ENCODE measurements at regions of chr20 and their contacts with region 1.

Region 1: DNA sequence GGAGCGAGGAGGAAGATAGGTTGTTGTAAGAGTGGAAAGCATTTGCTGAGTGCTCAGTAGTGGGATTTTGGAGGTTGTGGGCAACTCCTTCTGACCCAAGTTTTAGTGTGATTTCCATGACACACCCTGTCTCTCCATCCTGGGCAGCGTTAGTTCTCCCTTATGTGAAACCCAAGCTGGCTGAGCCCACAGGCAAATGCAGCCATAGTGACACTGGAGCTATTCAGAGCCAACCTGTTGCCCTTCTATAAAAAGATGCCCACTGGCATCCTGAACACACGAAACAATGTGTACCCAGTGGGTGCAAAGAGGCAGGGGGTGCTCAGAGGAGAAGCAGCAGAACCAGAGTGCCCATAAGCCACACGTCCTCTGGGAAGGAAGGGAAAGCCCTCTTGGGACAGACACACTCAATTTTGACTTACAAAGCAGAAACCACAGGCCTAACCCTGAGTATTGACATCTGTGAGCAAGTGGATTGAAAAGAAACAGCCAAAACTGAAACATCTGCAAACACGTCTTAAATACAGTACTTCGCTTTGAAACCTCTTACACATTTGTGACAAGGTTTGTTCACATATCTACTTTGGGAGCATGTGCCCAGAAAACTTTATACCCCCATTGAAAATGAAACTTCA is 54.6 kb downstream of the BPIFB1 start:
- DNase-seq: no peak
- H3K4me3 ChIP-seq: no peak overlapping the region
- H3K27ac ChIP-seq: no peak overlapping the region
- H3K4me1 ChIP-seq: no peaks in the 10 kb centered on the region
- H3K27me3 ChIP-seq: peaks cover 7% of the 10 kb centered on the region; the same call in 1 of the 2 replicates
- CTCF ChIP-seq: no peak

Region 2: DNA sequence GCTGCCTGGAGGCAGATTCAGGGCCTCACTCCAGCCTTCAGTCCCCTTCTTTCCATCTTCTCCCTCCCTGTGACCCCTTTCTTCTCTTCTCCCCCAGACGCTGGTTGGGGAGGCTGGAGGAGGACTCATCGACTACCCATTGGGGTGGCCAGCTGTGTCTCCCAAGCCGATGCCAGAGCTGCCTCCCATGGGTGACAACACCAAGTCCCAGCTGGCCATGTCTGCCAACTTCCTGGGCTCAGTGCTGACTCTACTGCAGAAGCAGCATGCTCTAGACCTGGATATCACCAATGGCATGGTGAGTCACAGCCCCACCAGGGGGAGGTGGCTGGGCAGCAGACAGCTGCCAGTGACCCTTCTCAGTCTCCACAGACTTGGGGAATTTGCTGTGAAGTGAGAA is 245.3 kb before region 1 on chr20:
- CTCF ChIA-PET with region 1: no interaction called
- POLR2A ChIA-PET with region 1: no interaction called
- intact Hi-C with region 1: no loop called
- DNase-seq: no peak
- H3K4me3 ChIP-seq: no peak overlapping the region
- H3K27ac ChIP-seq: no peak overlapping the region
- H3K4me1 ChIP-seq: no peaks in the 10 kb centered on the region
- H3K27me3 ChIP-seq: peaks cover 34% of the 10 kb centered on the region
- CTCF ChIP-seq: no peak

Region 3: GRCh38 chr20:33217052-33217451 is 120.6 kb before region 1 on chr20 and contains the start of gene BPIFA3:
- CTCF ChIA-PET with region 1: no interaction called
- POLR2A ChIA-PET with region 1: no interaction called
- intact Hi-C with region 1: no loop called
- DNase-seq: no peak
- H3K4me3 ChIP-seq: no peak within 1 kb of the TSS
- H3K27ac ChIP-seq: no peak within 1 kb of the TSS
- H3K4me1 ChIP-seq: no peaks in the 10 kb centered on the region
- H3K27me3 ChIP-seq: peaks cover 37% of the 10 kb centered on the region
- CTCF ChIP-seq: no peak
- total RNA-seq, gene BPIFA3: not detected in 2 replicates

Region 4: GRCh38 chr20:33299111-33299603 is 38.5 kb before region 1 on chr20:
- CTCF ChIA-PET with region 1: interaction called, 12 read pairs
- POLR2A ChIA-PET with region 1: no interaction called
- intact Hi-C with region 1: no loop called
- DNase-seq: peak; percentile 33 to 74
- H3K4me3 ChIP-seq: no peak overlapping the region
- H3K27ac ChIP-seq: no peak overlapping the region
- H3K4me1 ChIP-seq: no peaks in the 10 kb centered on the region
- H3K27me3 ChIP-seq: peaks cover 4% of the 10 kb centered on the region; the same call in 1 of the 2 replicates
- CTCF ChIP-seq: peak; percentile 98

Measured in PC-9 (cell line).